B cell (primary cell): ENCODE measurements at regions of chr1 and their contacts with region 1.

Region 1: GRCh38 chr1:221478050-221478949 is 263.6 kb downstream of the DUSP10 start:
- DNase-seq: peak; percentile 55
- ATAC-seq: peak; percentile 85
- H3K4me3 ChIP-seq: no peak overlapping the region
- H3K4me3 Mint-ChIP-seq: no peak overlapping the region
- H3K27ac ChIP-seq: no peak overlapping the region
- H3K27ac Mint-ChIP-seq: no peak overlapping the region
- H3K4me1 ChIP-seq: peaks cover 0 to 3% of the 10 kb centered on the region in 2 donors
- H3K4me1 Mint-ChIP-seq: peaks cover 2% of the 10 kb centered on the region
- H3K27me3 ChIP-seq: no peaks in the 10 kb centered on the region
- H3K27me3 Mint-ChIP-seq: peaks cover 5% of the 10 kb centered on the region
- CTCF ChIP-seq: peak; percentile 62

Region 2: DNA sequence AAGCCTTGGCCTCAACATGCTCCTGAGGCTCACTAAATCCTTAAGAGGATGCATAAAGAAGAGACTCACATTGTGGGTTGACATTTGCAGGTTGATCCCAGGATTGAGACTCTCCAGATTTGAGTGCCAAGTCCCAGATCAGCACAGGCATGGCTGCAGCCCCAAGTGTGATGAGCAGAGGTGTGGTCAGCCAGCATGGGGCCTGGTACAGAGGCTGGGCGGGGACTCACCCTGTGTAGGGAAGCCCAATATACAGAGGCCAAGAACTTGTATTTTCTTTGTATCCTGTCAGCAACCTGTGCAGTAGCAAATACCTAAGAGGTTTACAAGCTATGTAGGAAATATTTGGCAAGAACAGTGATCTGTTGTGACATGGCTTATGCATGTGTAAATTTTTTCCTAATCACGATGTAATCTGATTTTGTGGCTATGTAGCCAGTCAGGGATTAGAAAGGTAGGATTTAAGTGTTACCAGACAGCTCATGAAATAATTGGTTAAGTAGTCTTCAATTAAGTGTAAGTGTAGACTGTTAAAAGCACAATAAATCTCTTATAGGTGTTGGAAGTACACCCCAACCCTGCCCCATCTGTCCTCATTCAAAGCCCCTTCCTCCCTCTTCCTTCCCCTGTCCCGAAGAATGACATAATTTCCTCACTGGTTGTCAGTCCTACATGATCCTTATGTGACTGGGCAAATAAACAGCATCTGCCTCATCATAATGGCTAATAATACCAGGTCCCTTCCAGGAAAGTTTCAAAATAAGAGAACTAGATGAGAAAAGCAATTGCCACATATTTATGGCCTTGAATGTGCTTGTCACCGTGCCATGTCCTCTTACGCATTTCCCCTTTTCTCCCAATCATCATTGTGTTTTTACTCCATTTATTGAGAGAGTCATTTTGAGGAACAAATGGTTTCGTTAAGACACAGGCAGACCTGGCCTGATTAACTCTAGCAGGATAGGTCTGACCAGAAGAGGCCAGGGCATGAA is 478.1 kb before region 1 on chr1:
- CTCF ChIA-PET with region 1: no interaction called
- POLR2A ChIA-PET with region 1: no interaction called
- intact Hi-C with region 1: no loop called
- DNase-seq: no peak
- ATAC-seq: no peak
- H3K4me3 ChIP-seq: no peak overlapping the region
- H3K4me3 Mint-ChIP-seq: no peak overlapping the region
- H3K27ac ChIP-seq: no peak overlapping the region
- H3K27ac Mint-ChIP-seq: no peak overlapping the region
- H3K4me1 ChIP-seq: peaks cover 0 to 3% of the 10 kb centered on the region in 2 donors
- H3K4me1 Mint-ChIP-seq: no peaks in the 10 kb centered on the region
- H3K27me3 ChIP-seq: no peaks in the 10 kb centered on the region
- H3K27me3 Mint-ChIP-seq: no peaks in the 10 kb centered on the region
- CTCF ChIP-seq: no peak

Region 3: DNA sequence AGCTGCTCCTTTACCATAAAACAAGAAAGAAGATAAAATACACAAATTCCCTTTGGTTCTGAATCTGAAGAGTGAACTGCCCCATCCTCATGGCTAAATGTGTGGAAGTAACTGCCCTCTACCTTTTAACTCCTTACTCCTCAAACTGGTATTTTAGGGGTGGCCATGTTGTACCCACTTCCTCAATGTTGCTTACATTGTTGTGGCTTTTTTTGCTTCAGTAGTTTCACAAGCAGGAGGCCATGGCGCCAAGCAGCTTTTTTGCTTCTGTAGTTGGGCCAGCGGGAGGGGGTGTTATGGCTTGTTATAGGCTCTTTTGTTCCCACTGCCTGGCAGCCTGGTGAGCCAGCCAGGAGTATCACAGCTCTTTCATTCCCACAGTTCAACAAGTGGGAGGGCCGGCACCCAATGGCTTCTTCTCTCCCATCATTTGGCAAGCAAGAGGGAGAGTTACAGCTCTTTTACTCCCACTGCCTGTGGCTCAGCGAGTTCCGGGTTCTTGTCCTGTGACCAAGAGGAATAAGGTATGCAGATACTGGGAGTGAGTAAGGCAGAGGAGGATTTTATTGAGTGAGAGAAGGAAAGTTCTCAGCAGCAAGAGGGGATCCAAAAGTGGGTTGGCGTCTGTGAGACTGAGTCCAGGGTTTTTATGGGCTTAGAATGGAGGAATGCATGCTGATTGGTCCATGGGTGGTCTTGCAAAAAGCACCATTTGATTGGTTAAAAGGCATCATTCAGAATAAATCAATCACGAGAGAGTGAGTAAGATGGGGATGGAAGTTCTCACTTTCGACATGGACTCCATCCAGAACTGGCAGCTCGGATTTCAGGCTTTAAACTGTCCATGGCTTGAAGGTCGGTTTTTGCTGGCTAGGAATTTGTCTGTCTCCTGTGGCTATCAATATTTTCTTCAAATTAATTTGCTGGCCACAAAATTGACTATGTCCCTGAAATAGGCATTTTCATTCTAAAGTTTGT is 169.5 kb before region 1 on chr1:
- CTCF ChIA-PET with region 1: no interaction called
- POLR2A ChIA-PET with region 1: no interaction called
- intact Hi-C with region 1: no loop called
- DNase-seq: no peak
- ATAC-seq: no peak
- H3K4me3 ChIP-seq: no peak overlapping the region
- H3K4me3 Mint-ChIP-seq: no peak overlapping the region
- H3K27ac ChIP-seq: no peak overlapping the region
- H3K27ac Mint-ChIP-seq: no peak overlapping the region
- H3K4me1 ChIP-seq: no peaks in the 10 kb centered on the region
- H3K4me1 Mint-ChIP-seq: no peaks in the 10 kb centered on the region
- H3K27me3 ChIP-seq: peaks cover 0 to 6% (median 0%) of the 10 kb centered on the region in 4 experiments
- H3K27me3 Mint-ChIP-seq: peaks cover 20% of the 10 kb centered on the region
- CTCF ChIP-seq: no peak

Region 4: GRCh38 chr1:221576268-221576667 is 98.0 kb after region 1 on chr1:
- CTCF ChIA-PET with region 1: no interaction called
- POLR2A ChIA-PET with region 1: no interaction called
- intact Hi-C with region 1: no loop called
- DNase-seq: no peak
- ATAC-seq: no peak
- H3K4me3 ChIP-seq: no peak overlapping the region
- H3K4me3 Mint-ChIP-seq: no peak overlapping the region
- H3K27ac ChIP-seq: no peak overlapping the region
- H3K27ac Mint-ChIP-seq: no peak overlapping the region
- H3K4me1 ChIP-seq: no peaks in the 10 kb centered on the region
- H3K4me1 Mint-ChIP-seq: no peaks in the 10 kb centered on the region
- H3K27me3 ChIP-seq: no peaks in the 10 kb centered on the region
- H3K27me3 Mint-ChIP-seq: peaks cover 5% of the 10 kb centered on the region
- CTCF ChIP-seq: no peak

Region 5: GRCh38 chr1:221643404-221644144 is 165.3 kb after region 1 on chr1:
- CTCF ChIA-PET with region 1: no interaction called
- POLR2A ChIA-PET with region 1: no interaction called
- intact Hi-C with region 1: no loop called
- DNase-seq: no peak
- ATAC-seq: no peak
- H3K4me3 ChIP-seq: no peak overlapping the region
- H3K4me3 Mint-ChIP-seq: peak overlapping the region; percentile 14
- H3K27ac ChIP-seq: no peak overlapping the region
- H3K27ac Mint-ChIP-seq: no peak overlapping the region
- H3K4me1 ChIP-seq: peaks cover 15 to 16% of the 10 kb centered on the region in 2 donors
- H3K4me1 Mint-ChIP-seq: peaks cover 11% of the 10 kb centered on the region
- H3K27me3 ChIP-seq: no peaks in the 10 kb centered on the region
- H3K27me3 Mint-ChIP-seq: no peaks in the 10 kb centered on the region
- CTCF ChIP-seq: no peak

Region 6: DNA sequence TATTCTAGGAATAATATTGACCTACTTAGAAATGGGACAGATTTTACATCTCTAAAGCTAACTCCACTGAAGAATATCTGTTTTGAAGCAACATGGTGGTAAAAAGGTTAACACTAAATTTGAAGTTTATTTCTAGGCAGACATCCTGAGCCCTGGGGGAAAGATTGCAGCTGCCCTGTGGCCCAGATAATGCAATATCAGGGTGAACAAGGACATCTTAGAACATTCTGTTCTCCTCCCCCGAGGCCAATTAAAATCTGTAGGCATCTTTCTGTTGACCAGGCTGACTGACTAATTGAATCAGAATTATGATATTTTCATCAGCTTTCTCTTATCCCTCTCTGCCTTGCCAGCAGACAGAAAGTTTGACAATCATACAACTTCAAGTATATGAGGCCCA is 413.4 kb after region 1 on chr1:
- CTCF ChIA-PET with region 1: interaction called, 10 read pairs
- POLR2A ChIA-PET with region 1: no interaction called
- intact Hi-C with region 1: no loop called
- DNase-seq: no peak
- ATAC-seq: no peak
- H3K4me3 ChIP-seq: no peak overlapping the region
- H3K4me3 Mint-ChIP-seq: no peak overlapping the region
- H3K27ac ChIP-seq: no peak overlapping the region
- H3K27ac Mint-ChIP-seq: no peak overlapping the region
- H3K4me1 ChIP-seq: peaks cover 9% of the 10 kb centered on the region in 2 donors
- H3K4me1 Mint-ChIP-seq: peaks cover 16% of the 10 kb centered on the region
- H3K27me3 ChIP-seq: no peaks in the 10 kb centered on the region
- H3K27me3 Mint-ChIP-seq: peaks cover 4% of the 10 kb centered on the region
- CTCF ChIP-seq: no peak

Region 7: GRCh38 chr1:221979461-221980032 is 501.2 kb after region 1 on chr1:
- CTCF ChIA-PET with region 1: interaction called, 15 read pairs
- POLR2A ChIA-PET with region 1: no interaction called
- intact Hi-C with region 1: no loop called
- DNase-seq: peak; percentile 7
- ATAC-seq: no peak
- H3K4me3 ChIP-seq: no peak overlapping the region
- H3K4me3 Mint-ChIP-seq: no peak overlapping the region
- H3K27ac ChIP-seq: no peak overlapping the region
- H3K27ac Mint-ChIP-seq: no peak overlapping the region
- H3K4me1 ChIP-seq: no peaks in the 10 kb centered on the region
- H3K4me1 Mint-ChIP-seq: peaks cover 2% of the 10 kb centered on the region
- H3K27me3 ChIP-seq: no peaks in the 10 kb centered on the region
- H3K27me3 Mint-ChIP-seq: peaks cover 12% of the 10 kb centered on the region
- CTCF ChIP-seq: no peak

Region 8: DNA sequence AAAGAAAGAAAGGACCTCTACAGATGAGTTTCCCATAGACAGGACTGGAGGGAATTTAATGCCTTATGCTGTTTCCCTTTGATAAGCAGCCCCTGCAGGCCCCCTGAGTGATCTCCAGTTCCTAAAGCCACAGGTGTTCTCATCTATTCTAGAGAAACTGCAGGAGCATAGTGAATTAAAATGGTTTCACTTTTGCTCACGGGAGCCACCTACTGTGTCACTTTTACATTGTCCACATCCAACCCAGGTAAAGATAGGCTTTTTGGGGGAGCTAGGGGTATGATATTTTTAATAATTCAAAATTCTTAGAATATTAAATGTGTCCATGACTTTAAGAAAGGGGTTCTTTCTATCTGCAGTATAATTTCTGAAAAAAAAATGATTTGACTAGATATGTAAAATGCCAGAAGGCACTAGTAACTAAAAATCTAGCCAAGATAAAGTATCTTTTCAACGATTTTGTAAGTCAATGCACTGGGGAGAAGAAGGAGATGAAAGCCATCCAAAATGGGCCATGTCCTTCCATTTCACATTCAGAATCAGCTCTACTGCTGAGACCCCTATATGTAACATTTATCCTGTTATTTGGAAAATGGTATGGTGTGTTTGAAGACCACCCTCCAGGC is 530.9 kb after region 1 on chr1:
- CTCF ChIA-PET with region 1: interaction called, 111 read pairs
- POLR2A ChIA-PET with region 1: no interaction called
- intact Hi-C with region 1: loop called (anchors 1 kb)
- DNase-seq: peak; percentile 67
- ATAC-seq: peak; percentile 54
- H3K4me3 ChIP-seq: peak overlapping the region in 2 of 5 experiments; percentile 5 to 13
- H3K4me3 Mint-ChIP-seq: no peak overlapping the region
- H3K27ac ChIP-seq: no peak overlapping the region
- H3K27ac Mint-ChIP-seq: no peak overlapping the region
- H3K4me1 ChIP-seq: peaks cover 0 to 4% of the 10 kb centered on the region in 2 donors
- H3K4me1 Mint-ChIP-seq: no peaks in the 10 kb centered on the region
- H3K27me3 ChIP-seq: no peaks in the 10 kb centered on the region
- H3K27me3 Mint-ChIP-seq: no peaks in the 10 kb centered on the region
- CTCF ChIP-seq: peak; percentile 70

Region 9: GRCh38 chr1:222171005-222171404 is 692.7 kb after region 1 on chr1:
- CTCF ChIA-PET with region 1: interaction called, 21 read pairs
- POLR2A ChIA-PET with region 1: no interaction called
- intact Hi-C with region 1: loop called (anchors 1 kb)
- DNase-seq: peak; percentile 10
- ATAC-seq: peak; percentile 28
- H3K4me3 ChIP-seq: no peak overlapping the region
- H3K4me3 Mint-ChIP-seq: no peak overlapping the region
- H3K27ac ChIP-seq: no peak overlapping the region
- H3K27ac Mint-ChIP-seq: no peak overlapping the region
- H3K4me1 ChIP-seq: no peaks in the 10 kb centered on the region
- H3K4me1 Mint-ChIP-seq: no peaks in the 10 kb centered on the region
- H3K27me3 ChIP-seq: peaks cover 0 to 2% (median 0%) of the 10 kb centered on the region in 4 experiments
- H3K27me3 Mint-ChIP-seq: peaks cover 10% of the 10 kb centered on the region
- CTCF ChIP-seq: peak; percentile 45